Activated CD4-positive, alpha-beta T cell treated with anti-CD3 and anti-CD28 coated beads for 36 hours (primary cell): ENCODE measurements at regions of chr19 and their contacts with region 1.

Region 1: DNA sequence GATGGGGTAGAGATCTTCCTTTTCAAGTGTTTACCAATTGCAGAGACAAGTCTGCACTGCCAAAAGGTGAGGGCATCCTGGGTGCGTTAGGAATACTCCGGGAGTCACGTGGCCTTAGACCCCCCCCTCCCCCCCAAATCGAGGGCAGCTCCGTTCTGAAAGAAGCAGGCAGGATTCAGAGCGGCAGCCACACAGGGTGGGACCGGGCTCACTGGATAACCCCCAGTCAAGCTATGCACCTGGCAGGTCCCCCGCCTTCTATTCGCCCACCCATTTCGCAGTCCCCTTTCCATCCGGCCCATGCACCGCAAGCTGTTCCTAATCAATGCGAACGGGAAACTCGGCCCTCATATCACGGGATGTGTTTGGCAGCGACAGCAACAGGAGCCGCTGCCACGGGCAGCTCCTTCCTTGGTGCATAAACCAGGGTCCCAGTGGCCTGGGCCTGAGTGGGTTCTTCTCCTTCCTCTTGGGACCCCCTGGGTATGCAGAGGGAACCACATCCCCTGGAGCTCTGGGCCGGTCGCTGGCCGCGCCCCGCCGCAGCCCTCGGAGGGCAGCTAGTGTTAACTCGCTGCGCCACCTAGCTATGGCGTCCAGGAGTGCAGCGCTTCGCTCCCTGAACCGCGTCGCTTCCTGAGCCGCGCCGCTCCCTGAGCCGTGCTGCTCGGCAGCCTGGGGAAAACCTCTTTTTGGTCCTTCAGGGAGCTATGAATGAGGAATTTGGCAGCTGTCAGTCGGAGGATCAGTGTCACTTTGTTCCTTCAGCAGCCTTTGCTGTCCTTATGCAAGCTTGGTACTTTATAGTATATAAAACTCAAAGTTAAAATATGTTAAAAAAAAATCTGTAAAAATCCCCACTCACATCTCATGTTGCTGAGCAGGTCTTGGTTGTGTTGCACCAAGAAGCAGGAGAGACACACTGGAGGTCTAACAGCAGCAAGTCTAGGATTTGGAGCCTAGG is 41.4 kb downstream of the LYL1 start:
- DNase-seq: peak; percentile 89
- ATAC-seq: peak; percentile 99
- H3K4me3 Mint-ChIP-seq: peak overlapping the region; percentile 67
- H3K27ac Mint-ChIP-seq: no peak overlapping the region
- H3K4me1 Mint-ChIP-seq: peaks cover 6% of the 10 kb centered on the region
- H3K27me3 Mint-ChIP-seq: peaks cover 16% of the 10 kb centered on the region

Region 2: GRCh38 chr19:12974301-12975220 is 86.7 kb before region 1 on chr19:
- CTCF ChIA-PET with region 1: interaction called, 117 read pairs
- POLR2A ChIA-PET with region 1: no interaction called
- intact Hi-C with region 1: loop called (anchors 1 kb)
- DNase-seq: no peak
- ATAC-seq: no peak
- H3K4me3 Mint-ChIP-seq: no peak overlapping the region
- H3K27ac Mint-ChIP-seq: no peak overlapping the region
- H3K4me1 Mint-ChIP-seq: peaks cover 8% of the 10 kb centered on the region
- H3K27me3 Mint-ChIP-seq: peaks cover 7% of the 10 kb centered on the region

Region 3: GRCh38 chr19:12983542-12984142 is 77.6 kb before region 1 on chr19:
- CTCF ChIA-PET with region 1: interaction called, 117 read pairs
- POLR2A ChIA-PET with region 1: no interaction called
- intact Hi-C with region 1: loop called (anchors 1 kb)
- DNase-seq: peak; percentile 90
- ATAC-seq: peak; percentile 80
- H3K4me3 Mint-ChIP-seq: no peak overlapping the region
- H3K27ac Mint-ChIP-seq: no peak overlapping the region
- H3K4me1 Mint-ChIP-seq: no peaks in the 10 kb centered on the region
- H3K27me3 Mint-ChIP-seq: no peaks in the 10 kb centered on the region

Region 4: GRCh38 chr19:13012690-13013608 is 48.3 kb before region 1 on chr19:
- CTCF ChIA-PET with region 1: interaction called, 16 read pairs
- POLR2A ChIA-PET with region 1: no interaction called
- intact Hi-C with region 1: no loop called
- DNase-seq: peak; percentile 67
- ATAC-seq: peak; percentile 59
- H3K4me3 Mint-ChIP-seq: peak overlapping the region; percentile 72
- H3K27ac Mint-ChIP-seq: peak overlapping the region; percentile 79
- H3K4me1 Mint-ChIP-seq: peaks cover 22% of the 10 kb centered on the region
- H3K27me3 Mint-ChIP-seq: peaks cover 63% of the 10 kb centered on the region

Region 5: DNA sequence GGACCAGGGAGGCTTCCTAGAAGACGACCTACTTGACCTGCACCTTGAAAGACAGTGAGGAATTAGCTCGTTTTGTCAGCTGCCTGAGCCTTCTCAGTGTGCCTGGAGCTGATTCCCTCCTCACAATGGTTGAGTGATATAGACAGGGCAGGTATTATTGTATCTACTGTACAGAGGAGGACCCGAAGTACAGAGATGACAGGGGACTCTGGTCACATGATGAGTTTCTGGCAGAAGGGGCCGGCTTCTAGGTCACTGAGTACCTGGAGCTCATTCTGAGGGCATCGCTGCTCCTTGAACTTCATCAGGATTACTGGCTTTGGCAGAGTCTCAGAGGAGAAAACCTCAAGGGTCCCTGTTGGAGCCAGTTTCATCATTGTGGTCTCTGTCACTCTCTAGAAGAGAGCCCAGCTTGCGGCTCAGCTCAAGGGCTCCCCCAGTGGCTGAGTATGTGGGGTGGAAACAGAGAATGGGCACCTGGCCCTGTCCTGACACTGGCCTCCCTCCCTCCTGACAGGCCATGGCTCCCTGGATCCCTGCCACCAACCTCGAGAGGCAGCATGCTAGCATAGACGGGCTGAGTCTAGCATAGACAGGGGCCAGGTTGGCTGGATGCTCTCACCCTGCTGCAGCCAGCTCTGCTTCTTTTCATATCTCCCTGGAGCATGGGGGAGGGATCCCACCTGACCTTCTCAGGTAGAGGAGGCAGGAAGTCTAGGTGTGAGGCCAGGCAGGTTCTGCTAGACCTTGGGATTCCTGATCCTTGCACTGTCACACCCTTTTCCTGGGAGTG is 27.2 kb before region 1 on chr19:
- CTCF ChIA-PET with region 1: interaction called, 31 read pairs
- POLR2A ChIA-PET with region 1: no interaction called
- intact Hi-C with region 1: no loop called
- DNase-seq: peak; percentile 74
- ATAC-seq: peak; percentile 86
- H3K4me3 Mint-ChIP-seq: no peak overlapping the region
- H3K27ac Mint-ChIP-seq: no peak overlapping the region
- H3K4me1 Mint-ChIP-seq: peaks cover 2% of the 10 kb centered on the region
- H3K27me3 Mint-ChIP-seq: no peaks in the 10 kb centered on the region

Region 6: GRCh38 chr19:13044231-13044836 is 16.9 kb before region 1 on chr19:
- CTCF ChIA-PET with region 1: interaction called, 14 read pairs
- POLR2A ChIA-PET with region 1: no interaction called
- intact Hi-C with region 1: no loop called
- DNase-seq: peak; percentile 23
- ATAC-seq: peak; percentile 61
- H3K4me3 Mint-ChIP-seq: no peak overlapping the region
- H3K27ac Mint-ChIP-seq: peak overlapping the region; percentile 55
- H3K4me1 Mint-ChIP-seq: peaks cover 10% of the 10 kb centered on the region
- H3K27me3 Mint-ChIP-seq: no peaks in the 10 kb centered on the region